ENCODE measurements at regions of chr17 and their contacts with region 1.

Region 1: DNA sequence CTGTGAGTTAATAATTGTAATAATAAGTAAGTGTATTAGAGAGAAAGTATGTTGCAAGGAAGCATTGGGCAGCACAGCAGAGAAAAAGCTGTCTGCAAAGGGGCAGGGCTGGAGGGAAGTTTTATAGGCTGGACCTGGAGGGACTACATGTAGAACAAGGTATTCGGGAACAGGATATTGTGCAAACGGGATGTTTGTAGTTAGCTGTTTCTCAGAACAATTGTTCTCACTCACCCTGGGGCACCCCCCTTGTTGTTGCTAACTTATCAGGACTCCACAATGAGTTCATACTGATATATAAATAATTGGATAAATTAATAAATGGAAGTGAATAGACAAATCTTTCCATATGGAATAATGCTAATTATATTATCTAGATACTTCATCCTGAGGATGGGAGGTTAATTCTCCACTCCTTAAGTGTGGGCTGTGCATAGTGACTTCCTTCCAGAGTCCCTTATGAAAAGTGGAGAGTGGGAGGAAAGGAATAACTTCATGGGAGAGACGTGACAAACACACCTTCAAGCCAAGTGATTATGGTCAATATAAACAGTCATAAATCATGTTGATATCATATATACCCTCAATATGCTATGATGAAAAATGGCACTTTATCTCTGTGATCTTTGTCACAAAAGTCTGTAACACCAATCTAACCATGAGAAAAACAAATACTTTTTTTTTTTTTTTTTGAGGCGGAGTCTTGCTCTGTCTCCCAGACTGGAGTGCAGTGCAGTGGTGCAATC is 85.4 kb downstream of the PPM1E start:
- DNase-seq: no peak
- H3K4me3 ChIP-seq: no peak overlapping the region
- H3K27ac ChIP-seq: no peak overlapping the region
- H3K4me1 ChIP-seq: no peaks in the 10 kb centered on the region
- CTCF ChIP-seq: no peak

Region 2: DNA sequence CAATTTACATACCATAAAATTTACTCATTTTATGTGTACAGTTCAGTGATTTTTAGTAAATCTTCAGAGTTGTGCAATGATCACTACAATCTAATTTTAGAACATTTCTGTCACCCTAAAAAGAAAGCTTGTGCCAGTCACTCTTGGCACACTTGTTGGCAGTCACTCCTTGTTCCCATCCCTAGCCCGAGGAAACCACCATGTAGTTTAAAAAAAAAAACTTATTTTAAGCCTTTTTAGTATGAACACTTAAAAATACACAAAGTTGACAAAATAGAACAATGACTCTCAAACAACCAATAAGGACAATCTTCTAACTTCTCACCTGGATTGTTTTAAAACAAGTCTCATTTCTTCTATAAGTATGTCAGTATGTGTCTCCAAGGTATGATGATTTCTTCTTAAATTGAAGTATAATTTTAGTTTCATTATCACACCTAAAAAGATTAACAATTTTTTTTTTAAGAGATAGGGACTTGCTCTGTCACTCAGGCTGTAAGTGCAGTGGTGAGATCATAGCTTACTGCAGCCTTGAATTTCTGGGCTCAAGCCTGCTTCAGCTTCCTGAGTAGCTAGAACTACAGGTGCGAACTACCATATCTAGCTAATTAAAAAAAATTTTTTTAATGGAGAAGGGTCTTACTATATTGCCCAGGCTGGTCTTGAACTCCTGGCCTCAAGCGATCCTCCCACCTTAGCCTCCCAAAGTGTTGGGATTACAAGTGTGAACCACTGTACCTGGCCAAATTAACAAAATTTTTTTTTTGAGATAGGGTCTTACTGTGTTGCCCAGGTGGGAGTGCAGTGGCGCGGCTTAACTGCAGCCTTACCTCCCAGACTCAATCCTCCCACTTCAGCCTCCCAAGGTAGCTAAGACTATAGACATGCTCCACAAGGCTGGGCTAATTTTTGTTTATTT is 32.1 kb before region 1 on chr17:
- CTCF ChIA-PET with region 1: no interaction called
- POLR2A ChIA-PET with region 1: no interaction called
- intact Hi-C with region 1: loop called (anchors 5 kb)
- DNase-seq: no peak
- H3K4me3 ChIP-seq: no peak overlapping the region
- H3K27ac ChIP-seq: no peak overlapping the region
- H3K4me1 ChIP-seq: no peaks in the 10 kb centered on the region
- CTCF ChIP-seq: no peak

Region 3: GRCh38 chr17:58885402-58886009 is 44.5 kb after region 1 on chr17:
- CTCF ChIA-PET with region 1: no interaction called
- POLR2A ChIA-PET with region 1: no interaction called
- intact Hi-C with region 1: no loop called
- DNase-seq: no peak
- H3K4me3 ChIP-seq: no peak overlapping the region
- H3K27ac ChIP-seq: no peak overlapping the region
- H3K4me1 ChIP-seq: no peaks in the 10 kb centered on the region
- CTCF ChIP-seq: no peak